H1 (cell line): ENCODE measurements at regions of chr1 and their contacts with region 1.

Region 1: DNA sequence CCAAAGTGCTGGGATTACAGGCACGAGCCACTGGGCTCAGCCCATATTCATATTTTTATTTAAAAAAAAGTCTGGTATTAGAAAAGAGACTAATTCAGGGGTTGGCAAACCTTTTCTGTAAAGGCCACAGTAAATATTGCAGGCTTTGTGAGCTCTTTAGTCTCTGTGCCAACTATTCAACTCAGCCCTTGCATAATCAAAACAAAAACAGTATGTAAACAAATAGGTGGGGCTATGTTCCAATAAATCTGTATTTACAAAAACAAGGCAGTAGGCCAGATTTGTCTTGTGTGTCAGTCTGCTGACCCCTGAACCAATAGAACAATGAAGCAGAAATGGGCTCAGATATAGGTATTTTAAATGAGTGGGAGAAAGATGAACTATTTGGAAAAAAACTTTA is 49.3 kb downstream of the CDC42BPA start:
- DNase-seq: no peak
- H3K4me3 ChIP-seq: no peak overlapping the region
- H3K27ac ChIP-seq: no peak overlapping the region
- H3K4me1 ChIP-seq: peaks cover 0 to 3% (median 0%) of the 10 kb centered on the region in 4 experiments; a peak in 1 of 7 replicates
- H3K27me3 ChIP-seq: no peaks in the 10 kb centered on the region
- CTCF ChIP-seq: no peak
- EP300 ChIP-seq: no peak
- POLR2A ChIP-seq: no peak
- RAD21 ChIP-seq: no peak

Region 2: GRCh38 chr1:227245613-227246320 is 23.2 kb before region 1 on chr1:
- CTCF ChIA-PET with region 1: no interaction called
- POLR2A ChIA-PET with region 1: no interaction called
- DNase-seq: no peak
- H3K4me3 ChIP-seq: no peak overlapping the region
- H3K27ac ChIP-seq: no peak overlapping the region
- H3K4me1 ChIP-seq: peaks cover 0 to 3% (median 0%) of the 10 kb centered on the region in 4 experiments; a peak in 2 of 7 replicates
- H3K27me3 ChIP-seq: no peaks in the 10 kb centered on the region
- CTCF ChIP-seq: no peak
- EP300 ChIP-seq: no peak
- POLR2A ChIP-seq: no peak
- RAD21 ChIP-seq: no peak

Region 3: DNA sequence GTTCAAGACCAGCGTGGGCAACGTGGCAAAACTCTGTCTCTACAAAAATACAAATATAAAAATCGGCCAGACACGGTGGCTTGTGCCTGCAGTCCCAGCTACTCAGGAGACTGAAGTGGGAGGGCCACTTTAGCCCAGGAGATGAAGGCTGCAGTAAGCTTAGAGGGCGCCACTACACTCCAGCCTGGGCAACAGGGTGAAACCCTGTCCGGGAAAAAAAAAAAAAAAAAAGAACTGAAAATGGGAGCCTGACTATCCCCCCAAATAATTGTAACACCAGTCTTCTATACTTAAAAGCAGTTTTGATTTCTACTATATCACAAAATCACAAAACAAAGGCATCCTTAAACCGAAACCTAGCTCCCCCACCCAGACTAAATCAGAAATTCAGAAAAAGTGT is 11.0 kb before region 1 on chr1:
- CTCF ChIA-PET with region 1: interaction called, 12 read pairs
- POLR2A ChIA-PET with region 1: interaction called, 3 read pairs
- DNase-seq: no peak
- H3K4me3 ChIP-seq: no peak overlapping the region
- H3K27ac ChIP-seq: no peak overlapping the region
- H3K4me1 ChIP-seq: peaks cover 2 to 6% (median 6%) of the 10 kb centered on the region in 4 experiments; a peak in 5 of 7 replicates
- H3K27me3 ChIP-seq: no peaks in the 10 kb centered on the region
- CTCF ChIP-seq: peak; percentile 34 to 51 (median 50); a peak in 3 of 4 replicates
- EP300 ChIP-seq: no peak
- POLR2A ChIP-seq: no peak
- RAD21 ChIP-seq: peak; percentile 40 to 43; a peak in 2 of 4 replicates